Posterior cingulate gyrus (tissue), 11 donors: ENCODE measurements at regions of chr1 and their contacts with region 1.

Region 1: GRCh38 chr1:154669464-154670282 is 61.7 kb upstream of the ADAR start:
- DNase-seq: peak; percentile 57 to 96 (median 82)

Region 2: DNA sequence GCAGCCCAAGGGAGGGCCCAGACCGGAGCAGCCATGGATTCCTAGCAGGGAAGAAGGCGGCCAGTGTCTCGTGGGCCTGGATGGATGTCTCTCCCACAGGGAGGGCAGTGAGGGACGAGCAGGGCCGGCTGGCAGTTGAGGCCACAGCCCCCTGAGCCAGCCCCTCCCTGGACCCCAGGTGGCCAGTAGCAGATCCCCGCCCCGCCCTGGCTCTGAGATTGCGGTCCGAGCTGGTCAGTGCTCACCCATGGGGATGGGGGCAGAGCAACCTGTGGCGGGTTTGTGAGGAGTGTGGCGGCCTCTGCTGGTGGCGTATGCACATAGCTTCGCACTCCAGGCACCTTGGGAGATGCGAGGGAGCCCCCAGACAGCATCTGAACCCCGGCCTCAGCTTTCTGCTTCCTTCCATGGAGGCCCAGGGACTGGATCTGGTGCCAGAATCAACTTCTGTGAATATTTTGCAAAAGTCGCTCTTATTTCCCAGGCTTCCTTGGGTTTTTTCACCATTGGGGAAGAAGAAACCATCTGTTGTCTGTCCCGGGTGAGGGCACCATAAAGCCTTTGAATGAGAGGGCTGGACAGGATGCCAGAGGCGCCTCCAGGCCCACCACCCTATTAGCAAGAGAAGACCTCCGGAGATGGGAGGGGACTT is 208.8 kb after region 1 on chr1:
- intact Hi-C with region 1: loop called (anchors 1 kb)
- DNase-seq: peak; percentile 67 to 98 (median 86)